ENCODE measurements at regions of chr20 and their contacts with region 1.

Region 1: DNA sequence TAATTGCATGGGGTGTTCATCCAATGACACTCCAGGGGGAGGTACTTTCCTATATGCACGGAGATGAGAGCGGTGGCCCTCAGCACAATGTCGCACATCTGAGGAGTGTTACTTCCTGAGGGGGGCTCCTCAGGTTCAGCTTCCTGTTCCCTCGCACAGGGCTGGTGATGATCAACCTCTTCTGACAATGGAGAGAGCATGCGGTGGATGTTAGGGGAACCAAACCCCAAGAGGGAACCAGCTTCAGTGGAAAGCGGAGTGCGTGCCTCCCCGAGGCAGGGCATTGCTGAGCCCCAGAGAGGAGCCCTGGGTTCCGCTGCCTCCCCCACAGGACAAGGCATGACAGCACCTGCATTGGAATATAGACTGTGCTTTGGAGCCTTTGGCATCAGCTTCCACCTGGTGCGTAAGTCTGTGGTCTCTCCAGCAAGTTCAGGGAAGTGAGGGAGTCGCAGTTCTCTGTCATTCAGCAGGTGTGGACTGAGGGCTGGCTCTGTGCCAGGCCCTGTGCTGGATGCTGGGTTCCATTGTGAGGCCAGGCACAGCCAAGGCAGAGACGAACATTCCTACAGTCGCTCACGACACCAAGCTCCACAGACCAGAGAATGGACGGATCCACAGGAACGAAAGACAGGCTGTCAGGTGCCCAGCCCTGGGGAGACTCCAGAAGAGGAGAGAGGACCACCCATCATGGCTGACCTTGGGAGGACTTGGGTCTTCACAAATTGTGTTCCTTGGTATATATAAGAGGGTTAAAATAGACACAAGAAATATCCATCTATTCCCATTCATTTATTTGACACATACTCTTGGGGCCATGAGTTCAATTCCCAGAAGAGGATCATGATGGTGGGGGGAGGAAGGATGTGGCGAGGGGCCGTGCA is 3.9 kb upstream of the ZNF831 start:
- DNase-seq: peak; percentile 85 to 94 (median 89)
- H3K4me3 ChIP-seq: peak overlapping the region; percentile 48 to 76
- H3K4me3 Mint-ChIP-seq: peak overlapping the region; percentile 83 to 96 (median 89)
- H3K27ac ChIP-seq: peak overlapping the region; percentile 97
- H3K27ac Mint-ChIP-seq: peak overlapping the region; percentile 97 to 99 (median 99)
- H3K4me1 ChIP-seq: peaks cover 85% of the 10 kb centered on the region
- H3K4me1 Mint-ChIP-seq: peaks cover 67 to 98% (median 81%) of the 10 kb centered on the region in 4 donors
- H3K27me3 ChIP-seq: no peaks in the 10 kb centered on the region
- H3K27me3 Mint-ChIP-seq: no peaks in the 10 kb centered on the region

Region 2: DNA sequence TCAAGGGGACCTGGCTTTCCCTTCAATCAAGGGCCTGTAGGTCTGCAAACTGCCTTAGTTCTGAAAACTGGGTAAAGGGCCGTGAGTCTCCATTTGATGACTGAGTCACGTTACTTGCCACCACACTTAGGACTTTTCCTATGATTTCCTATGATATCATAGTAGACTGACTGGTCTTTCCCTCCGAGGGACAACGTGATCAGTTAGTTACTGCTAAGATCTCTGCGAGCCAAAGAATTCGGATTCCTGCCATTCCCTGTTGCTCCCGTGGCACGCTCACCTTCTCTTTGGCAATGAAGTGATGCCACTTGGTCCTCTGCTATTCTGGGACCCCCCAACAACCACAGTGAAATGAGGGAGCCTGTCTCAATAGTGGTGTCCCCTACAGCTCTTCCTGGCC is 12.3 kb after region 1 on chr20:
- CTCF ChIA-PET with region 1: interaction called, 6 read pairs
- POLR2A ChIA-PET with region 1: interaction called, 352 read pairs
- intact Hi-C with region 1: no loop called
- DNase-seq: no peak
- H3K4me3 ChIP-seq: no peak overlapping the region
- H3K4me3 Mint-ChIP-seq: peak overlapping the region in 3 of 8 donors; percentile 12 to 45 (median 33)
- H3K27ac ChIP-seq: no peak overlapping the region
- H3K27ac Mint-ChIP-seq: peak overlapping the region in 4 of 7 donors; percentile 35 to 99 (median 74)
- H3K4me1 ChIP-seq: peaks cover 99% of the 10 kb centered on the region
- H3K4me1 Mint-ChIP-seq: peaks cover 77 to 100% (median 88%) of the 10 kb centered on the region in 4 donors
- H3K27me3 ChIP-seq: no peaks in the 10 kb centered on the region
- H3K27me3 Mint-ChIP-seq: no peaks in the 10 kb centered on the region

Region 3: GRCh38 chr20:59177261-59178250 is 17.8 kb after region 1 on chr20:
- CTCF ChIA-PET with region 1: interaction called, 6 read pairs
- POLR2A ChIA-PET with region 1: interaction called, 352 read pairs
- intact Hi-C with region 1: no loop called
- DNase-seq: peak; percentile 54 to 75 (median 59)
- H3K4me3 ChIP-seq: no peak overlapping the region
- H3K4me3 Mint-ChIP-seq: peak overlapping the region; percentile 67 to 88 (median 78)
- H3K27ac ChIP-seq: peak overlapping the region; percentile 68
- H3K27ac Mint-ChIP-seq: peak overlapping the region; percentile 88 to 98 (median 96)
- H3K4me1 ChIP-seq: peaks cover 84% of the 10 kb centered on the region
- H3K4me1 Mint-ChIP-seq: peaks cover 70 to 98% (median 86%) of the 10 kb centered on the region in 4 donors
- H3K27me3 ChIP-seq: no peaks in the 10 kb centered on the region
- H3K27me3 Mint-ChIP-seq: no peaks in the 10 kb centered on the region

Region 4: GRCh38 chr20:59184880-59185447 is 25.2 kb after region 1 on chr20:
- CTCF ChIA-PET with region 1: interaction called, 3 read pairs
- POLR2A ChIA-PET with region 1: interaction called, 33 read pairs
- intact Hi-C with region 1: no loop called
- DNase-seq: no peak
- H3K4me3 ChIP-seq: no peak overlapping the region
- H3K4me3 Mint-ChIP-seq: no peak overlapping the region
- H3K27ac ChIP-seq: no peak overlapping the region
- H3K27ac Mint-ChIP-seq: peak overlapping the region in 5 of 7 donors; percentile 47 to 81 (median 54)
- H3K4me1 ChIP-seq: peaks cover 41% of the 10 kb centered on the region
- H3K4me1 Mint-ChIP-seq: peaks cover 43 to 79% (median 59%) of the 10 kb centered on the region in 4 donors
- H3K27me3 ChIP-seq: no peaks in the 10 kb centered on the region
- H3K27me3 Mint-ChIP-seq: no peaks in the 10 kb centered on the region

Region 5: GRCh38 chr20:59253779-59254319 is 94.1 kb after region 1 on chr20:
- CTCF ChIA-PET with region 1: no interaction called
- POLR2A ChIA-PET with region 1: interaction called, 12 read pairs
- intact Hi-C with region 1: no loop called
- DNase-seq: peak; percentile 22 to 78 (median 41)
- H3K4me3 ChIP-seq: peak overlapping the region in 1 of 2 donors; percentile 27
- H3K4me3 Mint-ChIP-seq: peak overlapping the region; percentile 2 to 78 (median 68)
- H3K27ac ChIP-seq: peak overlapping the region; percentile 42
- H3K27ac Mint-ChIP-seq: peak overlapping the region; percentile 88 to 98 (median 94)
- H3K4me1 ChIP-seq: peaks cover 80% of the 10 kb centered on the region
- H3K4me1 Mint-ChIP-seq: peaks cover 46 to 89% (median 67%) of the 10 kb centered on the region in 4 donors
- H3K27me3 ChIP-seq: no peaks in the 10 kb centered on the region
- H3K27me3 Mint-ChIP-seq: no peaks in the 10 kb centered on the region